ENCODE measurements at regions of chr4 and their contacts with region 1.

Region 1: DNA sequence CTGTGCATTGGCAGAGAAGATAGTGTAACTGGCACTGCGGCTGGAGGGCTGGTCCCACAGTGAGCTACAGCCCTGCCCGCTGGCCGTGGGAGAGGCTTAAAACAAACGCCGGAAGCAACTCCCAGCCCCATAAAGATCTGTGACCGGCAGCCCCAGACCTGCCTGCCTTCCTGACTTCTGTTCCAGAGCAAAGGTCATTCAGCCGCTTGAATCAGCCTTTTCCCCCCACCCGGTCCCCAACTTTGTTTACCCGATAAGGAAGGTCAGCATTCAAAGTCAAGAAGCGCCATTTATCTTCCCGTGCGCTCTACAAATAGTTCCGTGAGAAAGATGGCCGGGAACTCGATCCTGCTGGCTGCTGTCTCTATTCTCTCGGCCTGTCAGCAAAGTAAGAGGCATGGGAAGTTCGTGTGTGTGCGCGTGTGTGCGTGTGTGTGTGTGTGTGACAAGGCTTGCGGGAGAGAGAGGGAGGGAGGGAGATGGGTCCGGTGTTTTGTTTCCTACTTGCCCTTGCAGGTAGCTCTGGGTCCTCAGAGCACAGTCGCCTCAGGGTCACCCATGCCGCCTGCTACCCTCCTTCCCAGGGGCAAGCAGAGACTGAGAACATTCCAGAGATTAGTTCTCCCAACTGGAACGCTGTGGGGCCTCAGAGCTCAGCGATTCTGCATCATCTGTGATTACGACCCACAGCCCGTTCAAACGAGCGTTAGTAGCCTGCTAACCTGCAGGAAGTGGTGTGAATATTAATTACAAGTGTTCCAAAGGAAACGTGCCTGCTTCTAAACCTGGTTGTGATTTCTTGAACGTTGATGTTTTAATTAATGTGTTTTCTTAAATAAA is at the start of gene MGST2:
- DNase-seq: peak; percentile 98
- ATAC-seq: peak; percentile 97
- H3K4me3 ChIP-seq: peak within 1 kb of the TSS; percentile 75 to 81 (median 79)
- H3K27ac ChIP-seq: peak within 1 kb of the TSS; percentile 95
- H3K4me1 ChIP-seq: peaks cover 82% of the 10 kb centered on the region
- H3K27me3 ChIP-seq: no peaks in the 10 kb centered on the region; a peak in 1 of 5 replicates
- CTCF ChIP-seq: peak; percentile 21; the same call in 1 of the 2 replicates
- EP300 ChIP-seq: peak in 1 of 2 experiments; percentile 96; a peak in 2 of 4 replicates
- POLR2A ChIP-seq: peak in 1 of 2 experiments; percentile 65
- RAD21 ChIP-seq: peak; percentile 45; the same call in 1 of the 2 replicates
- total RNA-seq, gene MGST2: 120 and 205 TPM in 2 replicates

Region 2: GRCh38 chr4:139126898-139127297 is 539.0 kb before region 1 on chr4:
- CTCF ChIA-PET with region 1: no interaction called
- POLR2A ChIA-PET with region 1: no interaction called
- in situ Hi-C with region 1: no loop called
- intact Hi-C with region 1: no loop called
- DNase-seq: no peak
- ATAC-seq: no peak
- H3K4me3 ChIP-seq: no peak overlapping the region
- H3K27ac ChIP-seq: no peak overlapping the region
- H3K4me1 ChIP-seq: no peaks in the 10 kb centered on the region
- H3K27me3 ChIP-seq: no peaks in the 10 kb centered on the region
- CTCF ChIP-seq: no peak
- EP300 ChIP-seq: no peak
- POLR2A ChIP-seq: no peak
- RAD21 ChIP-seq: no peak

Region 3: DNA sequence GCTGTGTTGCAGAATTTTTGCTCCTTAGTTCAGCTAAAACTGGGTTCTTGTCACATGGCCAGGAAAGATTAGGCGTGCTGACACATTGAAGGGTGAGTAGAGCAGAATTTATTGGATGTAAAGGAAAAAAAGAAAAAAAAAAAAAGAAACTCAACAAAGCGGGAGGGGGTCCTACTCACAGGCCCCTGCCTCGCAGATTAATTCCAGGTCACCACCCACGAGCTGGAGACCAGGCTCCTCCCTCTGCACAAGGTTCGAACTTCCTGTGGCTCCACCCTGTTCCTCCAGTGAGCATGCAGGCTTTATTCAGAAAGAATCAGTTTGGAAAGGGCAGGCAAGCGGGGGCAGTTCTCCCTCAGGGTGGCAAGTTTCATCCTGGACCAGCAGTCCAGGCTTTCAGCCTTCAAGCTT is 16.8 kb after region 1 on chr4:
- CTCF ChIA-PET with region 1: no interaction called
- POLR2A ChIA-PET with region 1: interaction called, 32 read pairs
- in situ Hi-C with region 1: no loop called
- intact Hi-C with region 1: no loop called
- DNase-seq: no peak
- ATAC-seq: no peak
- H3K4me3 ChIP-seq: no peak overlapping the region
- H3K27ac ChIP-seq: peak overlapping the region; percentile 38
- H3K4me1 ChIP-seq: peaks cover 99% of the 10 kb centered on the region
- H3K27me3 ChIP-seq: no peaks in the 10 kb centered on the region
- CTCF ChIP-seq: no peak
- EP300 ChIP-seq: no peak
- POLR2A ChIP-seq: no peak
- RAD21 ChIP-seq: no peak

Region 4: GRCh38 chr4:139692309-139693012 is 26.6 kb after region 1 on chr4:
- CTCF ChIA-PET with region 1: interaction called, 3 read pairs
- POLR2A ChIA-PET with region 1: interaction called, 59 read pairs
- in situ Hi-C with region 1: no loop called
- intact Hi-C with region 1: loop called (anchors 1 kb)
- DNase-seq: peak; percentile 94
- ATAC-seq: peak; percentile 85
- H3K4me3 ChIP-seq: peak overlapping the region in 1 of 3 experiments; percentile 55; a peak in 2 of 6 replicates
- H3K27ac ChIP-seq: peak overlapping the region; percentile 97
- H3K4me1 ChIP-seq: peaks cover 87% of the 10 kb centered on the region
- H3K27me3 ChIP-seq: no peaks in the 10 kb centered on the region
- CTCF ChIP-seq: peak; percentile 44
- EP300 ChIP-seq: peak; percentile 52 to 96; a peak in 2 of 4 replicates
- POLR2A ChIP-seq: peak in 1 of 2 experiments; percentile 13; a peak in 1 of 4 replicates
- RAD21 ChIP-seq: 0 out of 2 replicates have a peak, but pooled peaks have one; percentile 10

Region 5: DNA sequence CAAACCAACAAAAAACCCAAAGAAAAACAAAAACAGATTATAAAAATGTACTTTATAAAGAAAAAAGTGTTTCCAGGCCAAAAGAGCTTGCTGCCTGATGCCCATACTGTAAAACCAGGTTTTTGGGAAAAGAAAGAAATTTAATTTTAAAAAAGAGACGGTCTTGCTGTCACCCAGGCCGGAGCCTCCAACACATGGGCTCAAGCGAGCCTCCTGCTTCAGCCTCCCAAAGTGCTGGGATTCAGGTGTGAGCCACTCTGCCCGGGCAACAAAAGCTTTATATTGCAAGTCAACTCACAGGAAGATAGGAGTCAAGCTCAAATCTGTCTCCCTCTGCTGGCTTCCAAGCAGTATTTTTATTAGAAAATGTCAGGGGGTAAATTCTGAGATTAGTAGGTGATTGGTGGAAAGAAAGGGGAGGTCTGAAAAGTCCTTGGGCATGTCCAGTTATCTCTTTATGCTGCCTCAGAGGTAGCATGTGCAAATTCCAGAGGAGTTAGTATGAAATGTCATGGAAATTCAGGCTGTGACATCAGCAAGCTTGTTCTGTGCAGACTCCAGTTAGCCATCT is 39.1 kb after region 1 on chr4:
- CTCF ChIA-PET with region 1: no interaction called
- POLR2A ChIA-PET with region 1: interaction called, 13 read pairs
- in situ Hi-C with region 1: no loop called
- intact Hi-C with region 1: no loop called
- DNase-seq: peak; percentile 44
- ATAC-seq: peak; percentile 65
- H3K4me3 ChIP-seq: no peak overlapping the region
- H3K27ac ChIP-seq: peak overlapping the region; percentile 11
- H3K4me1 ChIP-seq: no peaks in the 10 kb centered on the region
- H3K27me3 ChIP-seq: no peaks in the 10 kb centered on the region
- CTCF ChIP-seq: peak; percentile 32; the same call in 1 of the 2 replicates
- EP300 ChIP-seq: no peak
- POLR2A ChIP-seq: no peak
- RAD21 ChIP-seq: no peak

Region 6: DNA sequence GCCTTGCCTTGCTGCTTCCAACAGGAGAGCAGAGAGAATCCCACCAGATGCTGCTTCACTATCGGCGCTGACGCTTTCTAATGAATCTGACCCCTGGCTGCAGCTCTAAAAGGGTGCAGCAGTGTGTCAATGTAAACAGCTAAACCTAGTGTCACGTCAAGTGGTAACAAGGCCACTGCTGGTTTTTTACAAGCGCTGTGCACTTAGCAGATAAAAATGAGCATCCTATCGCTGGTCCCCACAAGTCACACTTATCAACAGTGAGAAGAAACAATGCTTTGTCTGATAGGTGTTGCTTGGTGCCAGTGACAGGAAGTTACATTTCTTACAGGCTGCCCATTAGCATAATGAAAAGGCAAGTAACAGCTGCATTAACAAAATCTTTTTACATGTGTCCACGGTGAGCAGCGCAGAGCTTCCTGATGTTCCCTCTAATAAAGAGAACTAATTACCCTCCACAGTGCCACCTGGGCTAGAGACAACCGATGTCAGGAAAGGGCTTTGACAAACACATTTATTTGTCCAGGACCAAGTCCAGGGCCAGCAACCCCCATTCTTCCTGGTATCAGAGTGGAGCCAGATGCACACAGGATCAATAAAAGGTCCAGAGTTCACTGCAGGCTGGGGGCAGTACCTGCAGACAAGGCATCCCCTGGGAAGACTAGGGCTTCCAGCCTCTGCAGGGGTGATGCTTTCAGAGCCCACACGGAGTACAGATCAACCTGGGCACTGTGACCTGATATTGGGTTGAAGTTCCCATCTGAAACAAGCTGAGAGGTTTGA is 175.7 kb after region 1 on chr4:
- CTCF ChIA-PET with region 1: no interaction called
- POLR2A ChIA-PET with region 1: interaction called, 5 read pairs
- in situ Hi-C with region 1: no loop called
- intact Hi-C with region 1: loop called (anchors 10 kb)
- DNase-seq: peak; percentile 98
- ATAC-seq: peak; percentile 97
- H3K4me3 ChIP-seq: peak overlapping the region; percentile 34 to 54 (median 39)
- H3K27ac ChIP-seq: peak overlapping the region; percentile 91
- H3K4me1 ChIP-seq: peaks cover 82% of the 10 kb centered on the region
- H3K27me3 ChIP-seq: no peaks in the 10 kb centered on the region
- CTCF ChIP-seq: peak; percentile 41
- EP300 ChIP-seq: peak; percentile 82 to 98
- POLR2A ChIP-seq: peak in 1 of 2 experiments; percentile 3; a peak in 1 of 4 replicates
- RAD21 ChIP-seq: peak; percentile 38; the same call in 1 of the 2 replicates

Region 7: DNA sequence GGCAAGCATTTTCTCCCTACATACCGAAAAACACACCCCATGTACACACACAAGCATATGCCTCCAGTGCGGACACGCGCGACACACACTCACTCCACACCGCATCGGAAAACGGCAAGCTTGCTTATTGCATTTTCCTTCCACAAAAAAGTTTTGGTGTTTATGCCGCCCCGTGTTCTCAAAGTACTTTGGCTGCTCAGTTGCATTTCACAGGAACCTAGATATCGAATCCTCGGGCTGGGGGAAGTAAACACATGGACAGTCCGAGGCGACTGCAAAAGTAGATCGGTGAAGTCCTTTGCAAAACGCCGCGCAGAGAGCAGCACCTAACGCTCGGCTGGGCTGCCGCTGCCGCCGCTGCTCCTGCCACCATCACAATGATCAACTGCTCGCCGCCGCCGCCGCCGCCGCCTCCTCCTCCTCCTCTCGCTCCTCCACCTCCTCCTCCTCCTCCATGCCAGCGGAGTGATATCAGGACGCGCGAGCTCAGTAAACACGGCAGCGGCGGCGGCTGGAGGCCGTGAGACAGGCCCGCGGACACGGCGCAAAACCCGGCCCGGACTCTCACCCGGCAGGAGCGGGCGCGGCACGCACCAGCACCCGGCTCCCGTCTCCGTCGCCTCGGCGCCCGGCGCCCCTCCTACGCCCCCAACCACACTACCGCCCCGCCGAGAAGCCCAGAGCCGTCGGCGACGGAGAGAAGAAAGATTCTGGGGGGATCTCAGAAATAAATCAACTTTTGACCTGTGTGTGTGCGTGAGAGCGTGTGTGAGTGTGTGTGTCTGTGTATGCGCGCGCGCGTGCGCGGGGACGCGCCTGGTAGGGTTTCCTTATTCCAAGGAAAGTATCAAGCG is 488.0 kb after region 1 on chr4 and contains the start of gene MAML3:
- CTCF ChIA-PET with region 1: no interaction called
- POLR2A ChIA-PET with region 1: no interaction called
- in situ Hi-C with region 1: no loop called
- intact Hi-C with region 1: loop called (anchors 5 kb)
- DNase-seq: peak; percentile 64
- ATAC-seq: peak; percentile 83
- H3K4me3 ChIP-seq: peak within 1 kb of the TSS; percentile 55 to 75 (median 65)
- H3K27ac ChIP-seq: no peak within 1 kb of the TSS
- H3K4me1 ChIP-seq: peaks cover 42% of the 10 kb centered on the region
- H3K27me3 ChIP-seq: peaks cover 3 to 48% of the 10 kb centered on the region in 2 experiments
- CTCF ChIP-seq: no peak
- EP300 ChIP-seq: no peak
- POLR2A ChIP-seq: no peak
- RAD21 ChIP-seq: 0 out of 2 replicates have a peak, but pooled peaks have one; percentile 33
- total RNA-seq, gene MAML3: 0.13 TPM in 1 of 2 replicates, not detected in the other